ENCODE measurements at regions of chr16 and their contacts with region 1.

Region 1: GRCh38 chr16:57300387-57301125 is 16.1 kb upstream of the PLLP start:
- DNase-seq: peak; percentile 98
- H3K4me3 Mint-ChIP-seq: no peak overlapping the region
- H3K27ac Mint-ChIP-seq: no peak overlapping the region
- H3K4me1 Mint-ChIP-seq: peaks cover 30% of the 10 kb centered on the region
- H3K27me3 Mint-ChIP-seq: no peaks in the 10 kb centered on the region
- CTCF ChIP-seq: peak; percentile 94

Region 2: DNA sequence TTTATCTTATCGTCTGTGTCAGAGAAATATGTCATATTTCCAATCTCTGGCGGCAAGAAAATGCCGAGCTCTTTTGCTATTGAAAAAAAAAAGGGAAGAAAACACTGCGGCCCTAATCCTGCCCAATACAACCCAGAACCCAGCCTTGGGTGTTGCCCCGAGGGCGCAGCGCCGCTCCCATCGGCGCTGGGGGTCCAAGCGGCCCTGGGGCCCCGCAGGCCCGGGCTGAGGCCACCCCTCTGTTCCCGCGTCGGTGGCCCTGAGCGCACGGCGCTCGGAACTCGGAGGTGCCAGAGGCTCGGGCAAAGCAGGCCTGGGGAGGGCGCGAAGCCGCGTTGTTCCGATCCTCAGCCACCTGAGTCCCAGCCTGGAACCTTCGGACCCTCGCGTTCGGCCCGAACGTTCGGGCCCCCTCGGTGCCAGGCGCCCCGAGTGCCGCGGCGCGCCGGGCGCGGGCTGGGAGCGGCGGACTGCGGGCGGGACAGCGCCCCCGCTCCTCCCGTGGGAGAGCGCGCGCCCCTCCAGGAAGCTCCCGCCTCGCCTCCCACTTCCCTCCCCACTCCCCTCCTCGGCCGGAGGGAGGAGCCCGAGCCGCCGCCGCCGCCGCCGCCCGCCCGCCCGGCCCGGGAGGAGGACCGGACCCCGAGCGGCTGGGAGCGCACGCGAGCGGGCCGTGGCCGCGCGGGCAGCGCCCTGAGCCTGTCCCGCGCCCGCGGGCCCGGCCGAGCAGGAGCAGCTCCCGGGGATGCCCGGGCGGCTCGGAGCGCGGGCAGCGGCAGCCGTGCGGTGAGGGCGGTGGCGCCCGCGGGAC is 208.4 kb before region 1 on chr16 and contains the start of gene CPNE2:
- CTCF ChIA-PET with region 1: interaction called, 6 read pairs
- intact Hi-C with region 1: loop called (anchors 5 kb)
- DNase-seq: peak; percentile 73
- H3K4me3 Mint-ChIP-seq: peak within 1 kb of the TSS; percentile 73
- H3K27ac Mint-ChIP-seq: no peak within 1 kb of the TSS
- H3K4me1 Mint-ChIP-seq: peaks cover 11% of the 10 kb centered on the region
- H3K27me3 Mint-ChIP-seq: peaks cover 46% of the 10 kb centered on the region
- CTCF ChIP-seq: no peak
- total RNA-seq, gene CPNE2: 12.9 and 14.5 TPM in 2 replicates

Region 3: DNA sequence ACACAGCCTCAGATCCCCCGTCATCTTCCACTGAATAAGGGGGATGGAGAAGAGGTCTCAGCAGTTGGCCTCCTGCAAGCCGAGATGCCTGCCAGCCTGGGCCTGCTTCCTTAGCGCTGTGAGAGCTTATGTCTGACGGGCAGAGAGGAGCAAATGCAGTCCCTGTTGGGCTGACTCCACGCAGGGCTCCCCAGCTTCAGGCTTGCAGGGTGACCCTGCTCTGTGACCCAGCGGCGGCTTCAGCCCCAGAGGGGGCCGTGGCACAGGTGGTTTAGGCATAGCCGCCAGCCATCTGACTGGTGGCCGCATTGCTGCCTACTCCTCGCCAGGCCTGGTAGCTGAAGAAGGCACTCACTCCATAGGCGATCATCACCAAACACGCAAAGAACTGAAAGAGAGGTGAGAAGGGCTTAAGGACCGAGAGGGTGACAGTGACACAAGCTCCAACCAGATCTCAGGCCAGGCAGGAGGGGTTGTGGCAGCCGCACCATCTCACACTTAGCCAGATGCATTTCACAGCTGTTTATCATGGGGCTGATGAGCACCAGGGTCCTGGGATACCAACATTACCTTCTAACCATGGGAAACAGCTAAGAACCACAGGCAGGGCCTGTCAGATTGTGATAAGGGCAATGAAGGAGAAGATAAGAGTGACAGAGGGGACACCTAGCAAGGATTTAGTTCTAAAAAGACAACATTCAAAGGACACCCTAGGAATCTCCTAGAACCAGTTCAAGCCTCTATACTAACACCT is 43.7 kb before region 1 on chr16:
- CTCF ChIA-PET with region 1: interaction called, 18 read pairs
- intact Hi-C with region 1: loop called (anchors 2 kb)
- DNase-seq: no peak
- H3K4me3 Mint-ChIP-seq: no peak overlapping the region
- H3K27ac Mint-ChIP-seq: no peak overlapping the region
- H3K4me1 Mint-ChIP-seq: peaks cover 35% of the 10 kb centered on the region
- H3K27me3 Mint-ChIP-seq: no peaks in the 10 kb centered on the region
- CTCF ChIP-seq: no peak

Region 4: DNA sequence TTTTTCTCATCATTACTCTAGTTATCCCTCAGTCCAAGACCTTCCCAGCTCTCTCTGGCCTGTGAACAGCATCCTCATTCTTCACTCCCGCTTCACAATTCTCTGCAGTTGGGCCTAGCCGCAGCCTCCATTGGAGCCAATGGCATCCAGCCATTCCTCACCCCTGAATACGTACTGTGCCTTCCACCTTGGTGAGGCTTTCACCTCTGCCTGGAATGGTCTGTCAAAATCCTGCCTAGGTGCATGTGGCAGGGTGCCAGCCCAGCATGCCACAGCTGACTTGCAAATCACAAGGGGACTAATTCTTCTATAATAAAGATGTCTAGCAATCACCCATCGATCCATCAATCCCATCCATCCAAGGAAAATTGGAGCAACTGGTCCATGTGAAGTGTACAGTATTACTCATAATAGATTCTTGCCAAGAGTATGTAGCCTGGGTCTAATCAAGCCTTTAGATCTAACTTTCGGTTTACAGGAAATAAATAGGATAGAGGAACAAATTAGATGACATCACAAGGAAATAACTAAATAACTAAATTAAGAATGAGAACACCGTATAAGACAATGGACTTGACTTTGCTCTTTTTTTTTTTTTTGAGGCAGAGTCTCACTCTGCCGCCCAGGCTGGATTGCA is 66.7 kb after region 1 on chr16:
- CTCF ChIA-PET with region 1: interaction called, 5 read pairs
- intact Hi-C with region 1: loop called (anchors 2 kb)
- DNase-seq: peak; percentile 60
- H3K4me3 Mint-ChIP-seq: peak overlapping the region; percentile 3
- H3K27ac Mint-ChIP-seq: peak overlapping the region; percentile 68
- H3K4me1 Mint-ChIP-seq: peaks cover 33% of the 10 kb centered on the region
- H3K27me3 Mint-ChIP-seq: no peaks in the 10 kb centered on the region
- CTCF ChIP-seq: no peak

Region 5: GRCh38 chr16:57413301-57413730 is 112.8 kb after region 1 on chr16:
- CTCF ChIA-PET with region 1: interaction called, 80 read pairs
- intact Hi-C with region 1: loop called (anchors 1 kb)
- DNase-seq: no peak
- H3K4me3 Mint-ChIP-seq: no peak overlapping the region
- H3K27ac Mint-ChIP-seq: no peak overlapping the region
- H3K4me1 Mint-ChIP-seq: peaks cover 39% of the 10 kb centered on the region
- H3K27me3 Mint-ChIP-seq: no peaks in the 10 kb centered on the region
- CTCF ChIP-seq: no peak

Region 6: DNA sequence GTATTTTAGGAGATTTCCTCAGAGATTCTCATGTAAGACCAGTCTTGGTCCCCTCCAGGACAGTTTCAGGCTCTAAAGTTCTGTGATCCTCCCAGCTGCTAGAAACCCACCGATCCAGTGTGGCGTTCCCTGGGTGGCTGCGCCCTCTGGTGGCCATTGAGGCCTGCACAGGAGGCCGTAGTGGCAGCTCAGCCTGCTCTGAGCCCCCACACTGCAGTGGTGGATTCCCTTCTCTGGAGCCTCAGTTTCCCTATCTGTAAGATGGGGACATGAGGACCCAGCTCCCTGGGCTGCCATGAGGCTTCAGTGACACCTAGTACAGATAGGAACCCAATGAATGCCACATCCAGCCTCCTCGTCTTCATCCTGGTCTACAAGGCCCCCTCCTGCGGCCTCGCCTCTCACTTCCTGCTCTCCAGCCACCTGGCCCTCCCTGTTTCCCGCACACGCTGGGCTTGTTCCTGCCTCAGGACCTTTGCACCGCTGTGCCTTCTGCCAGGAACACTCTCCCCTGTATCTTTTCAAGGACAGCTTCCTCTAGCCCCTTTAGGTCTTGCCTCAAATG is 219.3 kb after region 1 on chr16:
- CTCF ChIA-PET with region 1: interaction called, 4 read pairs
- intact Hi-C with region 1: loop called (anchors 2 kb)
- DNase-seq: peak; percentile 90
- H3K4me3 Mint-ChIP-seq: no peak overlapping the region
- H3K27ac Mint-ChIP-seq: no peak overlapping the region
- H3K4me1 Mint-ChIP-seq: peaks cover 6% of the 10 kb centered on the region
- H3K27me3 Mint-ChIP-seq: no peaks in the 10 kb centered on the region
- CTCF ChIP-seq: peak; percentile 99

Region 7: GRCh38 chr16:57576429-57576870 is 275.9 kb after region 1 on chr16:
- CTCF ChIA-PET with region 1: no interaction called
- intact Hi-C with region 1: no loop called
- DNase-seq: peak; percentile 82
- H3K4me3 Mint-ChIP-seq: no peak overlapping the region
- H3K27ac Mint-ChIP-seq: no peak overlapping the region
- H3K4me1 Mint-ChIP-seq: peaks cover 8% of the 10 kb centered on the region
- H3K27me3 Mint-ChIP-seq: peaks cover 35% of the 10 kb centered on the region
- CTCF ChIP-seq: peak; percentile 98

Measured in Calu3 (cell line).